Activated naive CD4-positive, alpha-beta T cell treated with anti-CD3 and anti-CD28 coated beads for 36 hours (primary cell): ENCODE measurements at regions of chr15 and their contacts with region 1.

Region 1: GRCh38 chr15:41774062-41774881 is at the start of gene MAPKBP1:
- DNase-seq: peak; percentile 98
- H3K4me3 Mint-ChIP-seq: peak within 1 kb of the TSS; percentile 85
- H3K27ac Mint-ChIP-seq: peak within 1 kb of the TSS; percentile 91
- H3K4me1 Mint-ChIP-seq: peaks cover 56% of the 10 kb centered on the region
- H3K27me3 Mint-ChIP-seq: no peaks in the 10 kb centered on the region
- total RNA-seq, gene MAPKBP1: 13.8 to 13.9 TPM

Region 2: GRCh38 chr15:41603941-41604911 is 170.0 kb before region 1 on chr15:
- CTCF ChIA-PET with region 1: interaction called, 16 read pairs
- intact Hi-C with region 1: no loop called
- DNase-seq: peak; percentile 72
- H3K4me3 Mint-ChIP-seq: peak overlapping the region; percentile 69
- H3K27ac Mint-ChIP-seq: no peak overlapping the region
- H3K4me1 Mint-ChIP-seq: peaks cover 11% of the 10 kb centered on the region
- H3K27me3 Mint-ChIP-seq: peaks cover 2% of the 10 kb centered on the region

Region 3: GRCh38 chr15:41795996-41796856 is 22.0 kb after region 1 on chr15:
- CTCF ChIA-PET with region 1: interaction called, 19 read pairs
- intact Hi-C with region 1: loop called (anchors 2 kb)
- DNase-seq: no peak
- H3K4me3 Mint-ChIP-seq: no peak overlapping the region
- H3K27ac Mint-ChIP-seq: no peak overlapping the region
- H3K4me1 Mint-ChIP-seq: peaks cover 19% of the 10 kb centered on the region
- H3K27me3 Mint-ChIP-seq: no peaks in the 10 kb centered on the region

Region 4: DNA sequence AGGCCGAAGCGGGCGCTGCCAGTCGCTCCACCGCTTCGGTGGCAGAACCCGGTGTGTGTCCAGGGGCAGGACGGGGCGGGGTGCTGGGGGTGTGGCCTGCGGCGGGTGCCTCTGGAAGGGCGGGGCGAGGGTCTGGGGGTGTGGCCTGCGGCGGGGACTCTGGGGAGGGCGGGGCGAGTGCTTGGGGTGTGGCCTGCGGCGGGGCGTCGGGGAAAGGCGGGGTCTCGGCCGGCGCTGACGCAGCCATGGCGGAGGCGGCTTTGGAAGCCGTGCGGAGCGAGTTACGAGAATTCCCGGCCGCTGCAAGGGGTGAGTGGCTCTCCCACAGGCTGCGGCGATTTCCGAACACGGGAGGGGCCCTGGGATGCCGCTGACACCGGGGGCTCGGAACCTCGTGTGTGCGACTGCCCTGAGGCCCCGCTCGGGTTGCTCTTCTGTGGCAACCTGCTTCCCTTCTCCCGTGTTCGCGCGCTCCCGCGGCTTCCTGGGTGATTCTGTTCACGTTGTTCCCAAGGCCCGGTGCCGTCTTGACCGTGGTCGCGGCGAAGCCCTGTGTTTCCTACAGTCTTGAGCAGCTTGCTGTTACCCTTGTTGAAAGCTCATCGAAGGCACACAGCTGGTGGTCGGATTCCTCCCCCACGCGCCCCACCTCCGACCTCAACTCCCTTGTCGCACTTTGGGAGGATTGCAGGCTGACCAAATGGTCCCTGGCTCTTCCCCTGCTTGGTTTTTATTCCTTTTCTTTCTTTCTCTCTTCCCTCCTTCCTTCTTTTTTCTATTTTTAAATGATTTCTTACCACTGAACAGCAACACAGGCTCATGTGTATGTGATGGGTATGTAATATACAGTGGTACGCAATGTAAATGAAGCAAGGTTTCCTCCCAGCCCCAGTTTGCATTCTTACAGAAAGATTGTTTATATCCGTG is 53.9 kb after region 1 on chr15 and contains the start of gene JMJD7:
- CTCF ChIA-PET with region 1: interaction called, 22 read pairs
- intact Hi-C with region 1: loop called (anchors 1 kb)
- DNase-seq: peak; percentile 97
- H3K4me3 Mint-ChIP-seq: peak within 1 kb of the TSS; percentile 82
- H3K27ac Mint-ChIP-seq: peak within 1 kb of the TSS; percentile 59
- H3K4me1 Mint-ChIP-seq: peaks cover 42% of the 10 kb centered on the region
- H3K27me3 Mint-ChIP-seq: no peaks in the 10 kb centered on the region
- total RNA-seq, gene JMJD7: 18.7 to 19.8 TPM

Region 5: DNA sequence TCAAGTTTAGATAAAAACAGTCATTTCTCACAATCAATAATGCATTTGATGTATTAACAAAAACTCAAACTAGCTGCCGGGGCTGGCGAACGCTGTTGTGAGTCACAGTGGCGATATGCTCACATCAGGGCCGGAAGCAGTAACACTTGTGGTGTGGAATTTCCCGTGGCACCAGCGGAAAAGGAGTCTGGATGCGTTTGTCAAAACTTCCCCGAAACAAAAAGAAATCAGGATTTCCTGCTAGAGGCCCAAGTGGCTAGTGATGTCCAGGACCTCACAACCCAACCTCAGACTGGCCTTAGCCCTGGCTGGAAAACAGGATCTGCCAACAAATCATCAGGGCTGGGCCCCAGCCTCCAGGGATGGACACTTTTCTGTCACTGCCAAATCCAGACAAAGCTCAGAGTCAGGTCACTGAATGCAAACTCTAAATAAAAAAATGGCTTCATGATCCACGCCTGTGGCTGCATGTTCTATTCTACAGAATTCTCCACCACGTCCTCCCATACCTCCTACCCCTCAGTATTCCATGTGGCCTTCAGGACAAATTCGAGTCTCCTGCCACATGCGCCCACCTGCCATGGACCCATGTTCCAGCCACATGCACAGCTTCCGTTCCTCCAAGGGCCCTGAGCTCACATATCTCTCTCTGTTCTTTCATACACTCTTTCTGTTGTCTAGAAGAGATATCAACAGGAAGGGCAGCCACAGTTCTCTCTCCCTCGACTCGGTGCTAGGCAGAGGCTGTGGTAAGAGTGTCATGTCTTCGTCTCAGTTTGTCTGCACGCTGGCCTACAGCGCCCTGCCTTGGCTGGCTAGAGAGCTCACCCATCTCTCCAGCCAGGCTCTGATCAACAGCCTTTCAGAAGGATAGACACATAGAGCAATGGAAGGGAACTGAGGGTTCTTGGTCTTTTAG is 162.6 kb after region 1 on chr15:
- CTCF ChIA-PET with region 1: interaction called, 11 read pairs
- intact Hi-C with region 1: loop called (anchors 1 kb)
- DNase-seq: peak; percentile 95
- H3K4me3 Mint-ChIP-seq: peak overlapping the region; percentile 68
- H3K27ac Mint-ChIP-seq: peak overlapping the region; percentile 100
- H3K4me1 Mint-ChIP-seq: peaks cover 71% of the 10 kb centered on the region
- H3K27me3 Mint-ChIP-seq: no peaks in the 10 kb centered on the region

Region 6: DNA sequence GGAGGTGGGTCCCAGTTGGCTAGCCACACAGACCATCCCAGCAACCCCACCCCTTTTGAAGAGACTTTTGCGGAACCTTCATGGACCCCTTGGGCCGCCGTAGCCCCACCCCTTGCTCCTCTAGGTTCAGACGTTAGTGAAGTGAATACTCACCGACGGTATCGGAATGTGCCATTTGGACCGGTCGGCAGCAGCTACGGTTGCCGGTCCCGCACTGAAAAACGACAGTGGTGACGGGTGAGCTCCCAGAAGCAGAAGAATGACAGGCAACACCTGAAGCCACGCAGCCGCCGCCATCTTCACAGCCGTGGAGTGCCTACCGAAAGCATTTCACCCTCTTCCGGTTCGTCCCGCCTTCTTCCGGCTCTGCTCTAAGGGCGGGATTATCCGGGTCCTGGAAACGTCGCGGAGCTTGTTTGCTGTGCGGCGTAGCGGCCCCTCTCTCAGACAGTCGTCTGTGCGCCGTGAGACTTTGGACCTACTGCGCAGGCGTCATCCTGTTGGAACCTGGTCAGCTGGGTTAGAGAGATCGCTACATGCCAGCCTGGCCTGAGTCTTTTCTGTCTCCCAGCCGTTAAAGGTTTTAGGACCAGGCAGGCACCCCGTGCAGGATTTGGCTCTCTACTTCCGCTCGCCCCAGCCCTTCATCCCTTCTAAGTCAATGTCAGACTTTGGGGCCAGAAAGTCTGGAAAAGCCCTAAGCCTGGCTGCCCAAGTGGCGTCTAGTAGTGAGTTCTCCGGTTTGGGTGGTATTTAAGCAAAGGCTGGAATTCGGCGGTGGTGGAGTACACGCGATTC is 499.0 kb after region 1 on chr15 and contains the starts of genes GANC and TMEM87A:
- CTCF ChIA-PET with region 1: no interaction called
- intact Hi-C with region 1: loop called (anchors 1 kb)
- DNase-seq: peak; percentile 98
- H3K4me3 Mint-ChIP-seq: peak within 1 kb of the TSS; percentile 99
- H3K27ac Mint-ChIP-seq: peak within 1 kb of the TSS; percentile 99
- H3K4me1 Mint-ChIP-seq: peaks cover 45% of the 10 kb centered on the region
- H3K27me3 Mint-ChIP-seq: no peaks in the 10 kb centered on the region
- total RNA-seq, gene GANC: 27.4 to 27.7 TPM
- total RNA-seq, gene TMEM87A: 26.6 to 28.4 TPM